ENCODE measurements at regions of chr1 and their contacts with region 1.

Region 1: DNA sequence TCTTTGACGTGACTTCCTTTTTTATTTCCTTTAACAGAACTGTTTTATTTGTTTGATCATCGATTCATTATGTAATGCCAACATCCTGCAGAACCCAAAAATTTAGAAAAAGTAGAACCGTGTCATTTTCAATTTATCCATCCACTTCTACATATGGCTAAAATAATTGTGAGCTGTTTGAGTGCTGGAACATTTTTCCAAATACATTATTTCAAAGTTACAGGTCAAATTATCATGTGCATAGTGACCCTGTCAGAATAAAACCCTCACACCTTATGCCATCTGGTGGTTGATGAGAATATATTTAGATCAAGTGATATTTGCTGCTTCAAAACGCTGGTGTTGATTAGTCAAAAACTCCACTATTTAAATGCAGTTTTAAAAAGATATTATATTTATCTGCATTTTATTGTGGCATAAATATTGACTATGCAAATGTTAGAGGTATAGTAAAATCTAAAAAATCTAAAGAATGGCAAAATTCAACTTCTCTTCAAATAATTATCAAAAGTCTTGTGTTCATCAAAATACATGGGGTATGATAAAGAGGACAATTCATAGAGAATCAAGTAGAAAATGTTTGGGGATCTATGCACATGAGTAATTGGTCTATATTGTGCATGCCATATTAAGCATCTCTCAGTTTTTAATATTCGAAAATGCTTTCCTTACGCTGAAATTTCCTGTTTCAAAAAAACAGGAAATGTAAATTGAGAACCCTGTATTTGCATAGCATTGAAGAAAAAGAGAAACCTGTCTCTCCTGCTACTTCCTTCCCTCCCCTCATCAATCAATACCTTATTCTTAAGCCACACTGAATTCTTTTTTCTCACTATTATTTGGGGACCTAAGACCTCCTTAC is 39.7 kb downstream of the UBE2U start:
- DNase-seq: no peak
- ATAC-seq: no peak
- H3K4me3 ChIP-seq: no peak overlapping the region
- H3K27ac ChIP-seq: no peak overlapping the region
- H3K4me1 ChIP-seq: no peaks in the 10 kb centered on the region
- H3K27me3 ChIP-seq: no peaks in the 10 kb centered on the region

Region 2: DNA sequence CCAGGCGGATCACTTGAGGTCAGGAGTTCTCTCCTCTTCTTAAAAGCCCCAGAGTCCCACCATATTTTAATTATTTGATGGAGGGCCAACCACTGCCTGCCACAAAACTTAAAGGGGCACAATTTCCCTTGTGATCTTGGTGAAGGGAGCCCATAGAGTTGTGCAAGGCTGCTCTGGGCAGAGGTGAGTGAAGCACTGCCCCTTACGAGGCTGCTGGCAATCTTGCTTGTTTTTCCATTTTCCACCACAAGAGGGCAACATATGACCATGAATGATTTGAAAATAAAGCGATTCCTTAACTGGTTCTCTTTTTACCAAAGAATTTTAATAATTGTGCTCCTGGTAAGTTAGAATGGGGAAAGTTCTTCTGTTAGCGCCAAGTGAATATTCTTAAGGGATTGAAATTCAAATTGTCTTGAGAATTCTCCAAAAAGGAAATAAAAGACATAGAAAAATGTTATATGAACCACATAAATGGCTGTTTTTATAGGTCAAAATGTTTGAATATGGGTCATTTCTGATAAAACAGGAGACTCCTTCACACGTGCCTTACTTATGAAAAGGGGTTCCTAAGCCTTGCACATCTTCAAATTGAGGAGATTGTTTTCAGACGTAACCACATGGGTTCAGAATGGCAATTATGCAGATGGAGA is 627.2 kb before region 1 on chr1:
- intact Hi-C with region 1: loop called (anchors 2 to 10 kb)
- DNase-seq: peak in 2 of 3 donors; percentile 31 to 47
- ATAC-seq: peak; percentile 63 to 66
- H3K4me3 ChIP-seq: no peak overlapping the region
- H3K27ac ChIP-seq: no peak overlapping the region
- H3K4me1 ChIP-seq: no peaks in the 10 kb centered on the region
- H3K27me3 ChIP-seq: no peaks in the 10 kb centered on the region

Region 3: DNA sequence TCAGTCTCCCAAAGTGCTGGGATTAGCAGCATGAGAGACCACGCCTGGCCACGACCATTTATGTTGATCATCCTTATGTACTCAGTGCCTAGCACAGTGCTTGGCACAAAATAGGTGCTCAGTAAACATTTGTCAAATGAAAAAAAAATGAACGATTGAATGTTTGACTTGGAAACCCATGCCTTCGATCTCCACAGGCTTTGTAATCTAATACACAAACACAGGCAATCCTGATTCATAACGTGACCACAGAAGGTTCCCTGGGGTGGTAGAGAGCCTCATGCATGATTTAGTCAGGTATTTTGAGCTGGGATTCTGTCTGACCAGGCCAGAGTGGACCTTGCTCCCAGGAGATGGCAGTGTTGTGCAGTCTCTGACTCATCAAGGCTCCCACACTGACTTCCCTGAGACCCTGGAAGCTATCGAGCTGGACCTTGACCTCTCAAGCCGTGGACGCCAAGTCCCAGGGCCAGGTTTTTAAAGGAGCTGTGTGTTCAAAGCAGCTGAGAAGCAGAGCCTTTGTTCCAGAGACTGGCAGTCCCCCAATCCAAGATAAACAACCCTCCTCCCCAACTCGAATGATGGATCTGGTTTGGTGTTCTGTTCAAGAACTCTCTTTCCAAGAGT is 568.8 kb before region 1 on chr1:
- intact Hi-C with region 1: loop called (anchors 5 to 10 kb)
- DNase-seq: peak; percentile 73 to 92 (median 86)
- ATAC-seq: peak; percentile 92 to 95
- H3K4me3 ChIP-seq: no peak overlapping the region
- H3K27ac ChIP-seq: no peak overlapping the region
- H3K4me1 ChIP-seq: no peaks in the 10 kb centered on the region
- H3K27me3 ChIP-seq: no peaks in the 10 kb centered on the region

Measured in right cardiac atrium (tissue), 5 donors.